ENCODE measurements at regions of chr2 and their contacts with region 1.

Region 1: DNA sequence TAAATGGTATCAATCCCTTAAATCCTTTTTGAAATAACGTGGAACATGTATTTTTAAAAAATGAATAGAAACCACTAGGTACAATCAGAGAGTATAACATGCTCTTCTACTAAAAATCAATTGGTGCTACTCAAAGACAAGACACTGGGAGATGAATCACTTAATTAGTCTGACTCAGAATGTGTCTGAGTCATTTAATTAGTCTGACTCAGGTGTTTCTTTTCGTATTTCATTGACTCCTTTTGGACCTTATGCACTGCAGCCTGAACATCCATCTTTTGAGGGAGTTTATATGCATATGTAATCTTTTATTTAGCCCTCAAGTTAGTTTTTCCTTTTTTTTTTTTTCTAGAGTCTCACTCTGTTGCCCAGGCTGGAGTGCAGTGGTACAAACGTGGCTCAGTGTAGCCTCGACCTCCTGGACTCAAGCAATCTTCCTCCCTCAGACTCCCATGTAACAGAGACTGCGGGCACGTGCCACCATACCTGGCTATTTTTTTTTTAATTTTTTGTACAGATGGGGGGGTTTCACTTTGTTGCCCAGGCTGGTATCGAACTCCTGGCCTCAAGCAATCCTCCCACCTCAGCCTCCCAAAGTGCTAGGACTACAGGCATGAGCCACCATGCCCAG is 26.5 kb downstream of the PPP4R3B start:
- DNase-seq: no peak
- H3K4me3 Mint-ChIP-seq: no peak overlapping the region
- H3K27ac Mint-ChIP-seq: no peak overlapping the region
- H3K4me1 Mint-ChIP-seq: peaks cover 40% of the 10 kb centered on the region
- H3K27me3 Mint-ChIP-seq: no peaks in the 10 kb centered on the region

Region 2: DNA sequence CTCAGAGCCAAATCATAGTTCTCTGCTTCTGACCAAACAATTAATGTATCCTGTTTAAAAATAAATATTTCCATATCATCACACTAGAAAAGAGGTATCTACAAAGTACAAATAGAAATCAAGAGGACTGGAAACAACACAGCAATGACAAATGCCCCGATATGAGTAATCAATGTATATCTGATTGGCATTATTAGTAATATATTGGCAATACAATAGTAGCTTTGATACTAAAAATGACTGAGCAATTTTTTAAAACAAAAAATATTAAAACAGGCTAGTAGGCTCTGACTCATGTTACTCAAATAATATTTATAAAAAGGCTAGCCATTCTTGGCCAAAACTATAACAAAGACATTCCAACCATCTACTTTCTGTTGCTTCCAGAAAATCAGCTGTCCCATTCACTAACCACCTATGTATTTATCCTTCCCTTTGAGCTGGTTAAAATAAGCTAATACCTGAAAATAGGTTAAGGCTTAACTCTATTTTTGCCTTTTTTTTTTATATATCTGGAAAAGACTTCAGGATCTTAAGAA is 13.2 kb after region 1 on chr2:
- CTCF ChIA-PET with region 1: no interaction called
- intact Hi-C with region 1: loop called (anchors 1 kb)
- DNase-seq: no peak
- H3K4me3 Mint-ChIP-seq: no peak overlapping the region
- H3K27ac Mint-ChIP-seq: peak overlapping the region; percentile 68
- H3K4me1 Mint-ChIP-seq: peaks cover 55% of the 10 kb centered on the region
- H3K27me3 Mint-ChIP-seq: no peaks in the 10 kb centered on the region